ENCODE measurements at regions of chr2 and their contacts with region 1.

Region 1: DNA sequence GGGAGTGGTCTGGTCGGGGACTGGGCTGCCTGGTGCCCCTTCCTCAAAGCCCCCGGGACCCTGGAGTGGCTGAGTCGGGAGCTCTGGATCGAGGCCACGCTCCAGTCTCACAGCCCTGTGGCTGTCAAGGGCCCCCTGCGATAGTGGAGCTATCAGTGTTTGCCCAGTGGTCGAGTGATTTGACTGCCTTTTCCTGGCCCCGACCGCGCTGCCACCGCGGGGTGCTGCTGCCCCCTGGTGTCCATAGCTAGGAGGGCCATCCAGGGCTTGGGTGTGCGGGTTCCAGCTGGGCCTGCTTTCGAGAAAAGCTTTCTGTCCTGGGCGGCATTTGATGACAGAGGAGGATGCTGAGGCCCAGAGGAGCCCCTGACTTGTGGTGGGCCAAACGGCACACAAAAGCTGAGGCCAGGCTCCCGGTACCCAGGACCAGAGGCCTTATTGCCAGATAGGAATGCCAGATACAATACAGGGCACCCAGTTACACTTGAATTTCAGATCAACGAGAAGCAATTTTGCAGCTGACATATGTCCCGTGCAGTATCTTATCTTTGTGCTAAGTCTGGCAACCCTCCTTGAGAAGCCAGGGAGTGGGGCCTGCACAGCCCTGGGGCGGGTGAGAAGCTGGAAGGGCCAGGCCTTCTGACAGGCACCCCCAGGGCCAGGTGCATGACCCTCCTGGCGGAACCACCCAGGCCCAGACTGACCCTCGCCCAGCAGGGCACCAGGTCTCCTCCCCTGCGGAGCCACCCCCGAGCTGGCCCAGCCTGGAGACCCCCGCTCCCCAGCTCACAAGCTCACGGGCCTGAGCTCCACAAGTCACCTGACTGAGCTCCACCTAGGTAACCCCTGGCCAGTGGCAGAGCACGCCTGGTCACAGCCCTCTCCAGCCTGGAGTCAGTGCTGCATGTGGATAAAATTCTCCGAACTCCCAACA is 13.0 kb downstream of the ODC1 start:
- DNase-seq: peak in 1 of 2 donors; percentile 80
- ATAC-seq: peak; percentile 51

Region 2: DNA sequence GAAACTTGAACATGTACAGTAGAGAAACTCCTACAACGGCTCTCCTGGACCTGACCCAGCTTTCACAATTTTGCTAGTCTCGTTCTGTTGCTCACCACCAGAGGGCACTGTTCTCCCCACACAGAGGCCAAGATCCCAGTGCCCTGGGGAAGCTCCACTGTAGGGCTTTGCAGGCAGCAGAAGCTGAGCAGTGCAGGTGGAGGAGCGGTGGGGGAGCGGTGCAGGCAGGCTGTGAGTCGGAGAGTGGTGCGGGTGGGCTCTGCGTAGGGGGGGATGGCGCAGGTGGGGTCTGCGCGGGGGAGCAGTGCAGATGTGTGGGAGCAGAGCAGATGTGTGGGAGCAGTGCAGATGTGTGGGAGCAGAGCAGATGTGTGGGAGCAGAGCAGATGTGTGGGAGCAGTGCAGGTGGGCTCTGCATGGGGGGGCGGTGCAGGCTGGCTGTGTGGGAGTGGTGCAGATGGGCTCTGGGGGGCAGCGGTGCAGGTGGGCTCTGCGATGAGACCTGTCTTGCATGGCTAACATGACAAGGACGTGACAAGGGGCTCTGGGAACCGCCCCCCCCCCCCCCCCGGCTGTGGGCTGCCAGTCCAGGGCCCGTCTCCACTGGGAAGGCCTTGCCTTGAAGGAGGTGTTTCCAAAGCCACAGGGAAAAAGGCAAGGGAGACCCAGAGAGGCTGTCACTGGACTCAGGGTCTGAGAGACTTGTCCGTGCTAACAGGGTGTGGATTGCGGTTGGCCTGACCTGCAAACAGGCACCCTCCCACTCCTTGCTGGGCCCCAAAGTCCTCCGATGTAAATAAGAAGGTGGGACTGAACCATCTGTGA is 362.3 kb before region 1 on chr2:
- intact Hi-C with region 1: loop called in 1 of 2 experiments (anchors 5 kb)
- DNase-seq: peak; percentile 81 to 82
- ATAC-seq: peak; percentile 98